ENCODE measurements at regions of chr22 and their contacts with region 1.

Region 1: GRCh38 chr22:36323182-36323854 is 64.4 kb downstream of the MYH9 start:
- DNase-seq: peak; percentile 83 to 88 (median 88)
- ATAC-seq: peak; percentile 59 to 69
- H3K4me3 ChIP-seq: no peak overlapping the region
- H3K27ac ChIP-seq: peak overlapping the region; percentile 99
- H3K4me1 ChIP-seq: peaks cover 38% of the 10 kb centered on the region
- H3K27me3 ChIP-seq: no peaks in the 10 kb centered on the region

Region 2: DNA sequence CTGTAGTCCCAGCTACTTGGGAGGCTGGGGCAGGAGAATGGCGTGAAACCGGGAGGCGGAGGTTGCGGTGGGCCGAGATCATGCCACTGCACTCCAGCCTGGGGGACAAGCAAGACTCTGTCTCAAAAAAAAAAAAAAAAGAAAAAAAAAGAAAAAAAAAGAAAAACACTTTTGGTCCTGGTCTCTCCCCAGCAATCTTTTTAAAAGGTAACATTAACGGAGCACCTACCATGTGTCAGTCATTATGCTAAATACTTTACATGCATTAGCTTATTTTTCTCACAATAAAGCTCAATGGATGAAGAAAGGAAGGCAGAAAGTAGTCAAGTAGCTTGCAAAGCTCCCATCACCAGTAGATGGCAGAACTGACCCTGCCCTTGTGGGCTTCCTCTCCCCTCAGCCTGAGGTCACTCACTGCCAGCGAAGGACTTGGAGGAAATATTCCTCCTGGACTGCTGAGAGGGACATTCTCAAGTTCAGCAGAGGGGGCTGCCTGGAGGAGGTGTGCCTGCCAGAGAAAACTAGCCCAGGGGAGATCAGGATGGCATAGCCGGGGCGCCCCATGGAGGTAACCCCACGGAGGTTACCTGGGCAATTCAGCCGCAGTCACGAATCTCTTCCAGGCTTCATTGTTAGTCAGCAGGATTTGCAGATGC is 178.3 kb before region 1 on chr22:
- intact Hi-C with region 1: no loop called
- DNase-seq: peak; percentile 68 to 80 (median 79)
- ATAC-seq: peak; percentile 83 to 85
- H3K4me3 ChIP-seq: no peak overlapping the region
- H3K27ac ChIP-seq: no peak overlapping the region
- H3K4me1 ChIP-seq: peaks cover 8% of the 10 kb centered on the region
- H3K27me3 ChIP-seq: no peaks in the 10 kb centered on the region

Region 3: GRCh38 chr22:36461669-36462649 is 138.6 kb after region 1 on chr22:
- intact Hi-C with region 1: loop called in 1 of 4 experiments (anchors 5 kb)
- DNase-seq: peak in 2 of 3 donors; percentile 48 to 50
- ATAC-seq: peak in 1 of 2 donors; percentile 2
- H3K4me3 ChIP-seq: no peak overlapping the region
- H3K27ac ChIP-seq: peak overlapping the region; percentile 61
- H3K4me1 ChIP-seq: peaks cover 7% of the 10 kb centered on the region
- H3K27me3 ChIP-seq: no peaks in the 10 kb centered on the region

Measured in right cardiac atrium (tissue), 5 donors.